ENCODE measurements at regions of chr11 and their contacts with region 1.

Region 1: GRCh38 chr11:19553683-19554333 is 158.8 kb upstream of the NAV2 start:
- DNase-seq: peak; percentile 69 to 91 (median 86)
- ATAC-seq: peak; percentile 70
- H3K4me3 ChIP-seq: no peak overlapping the region
- H3K4me1 ChIP-seq: peaks cover 13% of the 10 kb centered on the region
- CTCF ChIP-seq: peak; percentile 68

Region 2: DNA sequence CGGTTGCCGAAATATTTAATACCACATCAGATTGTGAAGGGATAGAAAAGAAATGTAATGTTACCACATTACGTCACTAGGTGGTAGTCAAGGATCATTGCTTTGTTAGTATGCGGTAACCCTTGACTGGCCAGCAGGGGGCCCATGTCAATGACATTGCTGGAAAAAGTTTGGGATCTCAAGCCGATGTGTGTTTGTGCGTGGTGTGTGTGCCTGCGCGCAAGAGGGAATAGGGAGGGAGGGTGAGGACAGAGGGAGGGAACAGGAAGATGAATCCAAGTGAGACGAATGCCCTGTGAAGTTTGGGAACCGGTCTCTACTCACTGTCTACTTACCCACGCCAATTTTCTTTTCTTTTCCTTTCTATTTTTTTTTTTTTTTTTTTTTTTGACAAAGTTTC is 482.6 kb before region 1 on chr11:
- intact Hi-C with region 1: loop called (anchors 5 to 10 kb)
- DNase-seq: peak; percentile 69 to 81 (median 72)
- ATAC-seq: peak; percentile 83
- H3K4me3 ChIP-seq: no peak overlapping the region
- H3K4me1 ChIP-seq: peaks cover 12% of the 10 kb centered on the region
- CTCF ChIP-seq: peak; percentile 77

Region 3: GRCh38 chr11:19259487-19260345 is 294.1 kb before region 1 on chr11:
- intact Hi-C with region 1: loop called (anchors 5 to 10 kb)
- DNase-seq: peak; percentile 62 to 86 (median 79)
- ATAC-seq: peak; percentile 92
- H3K4me3 ChIP-seq: no peak overlapping the region
- H3K4me1 ChIP-seq: no peaks in the 10 kb centered on the region
- CTCF ChIP-seq: peak; percentile 94

Region 4: DNA sequence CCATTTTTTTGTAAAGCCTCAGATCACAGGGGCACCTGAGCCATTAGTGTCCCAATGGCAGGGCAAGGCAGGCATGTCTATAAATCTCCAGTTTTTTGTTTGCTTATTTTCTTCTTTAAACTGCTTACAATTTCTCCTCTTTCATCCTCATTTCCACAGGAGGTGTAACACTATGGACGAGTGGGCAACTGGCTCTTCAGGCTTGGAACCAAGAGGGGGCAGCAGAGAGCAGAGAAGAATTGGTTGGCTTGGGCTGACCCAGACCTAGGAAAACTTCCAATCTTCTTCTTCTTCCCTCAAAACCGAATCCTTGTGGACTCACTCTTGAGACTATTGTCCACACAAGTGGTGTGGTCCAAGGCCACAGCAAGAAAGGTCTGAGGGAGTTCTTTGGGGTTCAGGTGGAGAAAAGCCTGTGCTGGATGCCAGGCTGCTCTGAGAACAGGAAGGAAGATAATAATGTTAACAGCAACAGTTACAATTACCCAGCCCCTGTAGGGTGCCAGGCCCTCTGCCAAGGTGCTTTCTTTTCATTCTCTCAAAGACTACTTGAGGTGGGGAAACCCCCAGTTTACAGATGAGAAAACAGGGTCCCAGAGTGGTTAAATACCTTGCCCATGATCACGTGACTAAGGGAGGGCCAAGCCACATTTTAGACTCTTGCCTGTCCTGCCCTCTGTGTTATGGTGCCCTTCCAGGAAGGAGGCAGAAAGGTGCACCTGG is 242.3 kb before region 1 on chr11:
- intact Hi-C with region 1: loop called (anchors 5 kb)
- DNase-seq: peak in 2 of 3 donors; percentile 64 to 88
- ATAC-seq: peak; percentile 81
- H3K4me3 ChIP-seq: no peak overlapping the region
- H3K4me1 ChIP-seq: no peaks in the 10 kb centered on the region
- CTCF ChIP-seq: peak; percentile 68

Region 5: GRCh38 chr11:19499026-19499669 is 54.7 kb before region 1 on chr11:
- intact Hi-C with region 1: no loop called
- DNase-seq: no peak
- ATAC-seq: no peak
- H3K4me3 ChIP-seq: no peak overlapping the region
- H3K4me1 ChIP-seq: no peaks in the 10 kb centered on the region
- CTCF ChIP-seq: no peak

Region 6: GRCh38 chr11:19903620-19904069 is 349.8 kb after region 1 on chr11:
- intact Hi-C with region 1: loop called in 1 of 2 experiments (anchors 5 kb)
- DNase-seq: peak in 2 of 3 donors; percentile 65 to 95
- ATAC-seq: peak; percentile 86
- H3K4me3 ChIP-seq: no peak overlapping the region
- H3K4me1 ChIP-seq: no peaks in the 10 kb centered on the region
- CTCF ChIP-seq: peak; percentile 50

Measured in mucosa of descending colon (tissue), 3 donors.